IMR-90 (cell line): ENCODE measurements at regions of chr17 and their contacts with region 1.

Region 1: GRCh38 chr17:2029911-2030778 is at the start of gene DPH1:
- DNase-seq: peak; percentile 91
- ATAC-seq: peak; percentile 75
- H3K4me3 ChIP-seq: peak within 1 kb of the TSS; percentile 68
- H3K27ac ChIP-seq: peak within 1 kb of the TSS; percentile 57
- H3K4me1 ChIP-seq: peaks cover 15% of the 10 kb centered on the region
- H3K27me3 ChIP-seq: peaks cover 15% of the 10 kb centered on the region
- CTCF ChIP-seq: no peak
- POLR2A ChIP-seq: peak; percentile 68
- RAD21 ChIP-seq: no peak
- total RNA-seq, gene DPH1: 20.6 and 24.4 TPM in 2 replicates

Region 2: GRCh38 chr17:1573916-1574696 is 456.0 kb before region 1 on chr17:
- CTCF ChIA-PET with region 1: no interaction called
- POLR2A ChIA-PET with region 1: no interaction called
- dilution Hi-C with region 1: no loop called
- in situ Hi-C with region 1: no loop called
- intact Hi-C with region 1: loop called (anchors 5 kb)
- DNase-seq: peak; percentile 66
- ATAC-seq: peak; percentile 58
- H3K4me3 ChIP-seq: no peak overlapping the region
- H3K27ac ChIP-seq: no peak overlapping the region; the same call in 1 of the 2 replicates
- H3K4me1 ChIP-seq: peaks cover 15% of the 10 kb centered on the region
- H3K27me3 ChIP-seq: no peaks in the 10 kb centered on the region
- CTCF ChIP-seq: peak; percentile 96
- POLR2A ChIP-seq: no peak
- RAD21 ChIP-seq: peak; percentile 91

Region 3: DNA sequence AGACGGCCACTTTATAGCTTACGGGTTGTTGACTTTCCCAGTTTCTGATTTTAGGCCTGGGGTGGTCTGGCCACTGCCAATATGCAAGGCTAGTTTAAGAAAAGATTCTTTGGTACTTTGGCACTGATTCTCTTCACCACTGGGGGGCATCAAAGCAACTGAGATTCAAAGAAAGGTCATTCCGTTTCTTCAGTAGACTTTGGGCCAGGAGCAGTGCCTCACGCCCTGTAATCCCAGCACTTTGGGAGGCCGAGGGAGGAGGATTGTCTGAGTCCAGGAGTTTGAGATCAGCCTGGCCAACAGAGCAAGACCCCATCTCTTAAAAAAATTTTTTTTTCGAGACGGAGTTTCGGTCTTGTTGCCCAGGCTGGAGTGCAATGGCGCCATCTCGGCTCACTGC is 147.3 kb before region 1 on chr17:
- CTCF ChIA-PET with region 1: interaction called, 4 read pairs
- POLR2A ChIA-PET with region 1: no interaction called
- dilution Hi-C with region 1: no loop called
- in situ Hi-C with region 1: no loop called
- intact Hi-C with region 1: loop called (anchors 1 kb)
- DNase-seq: peak; percentile 24
- ATAC-seq: no peak
- H3K4me3 ChIP-seq: no peak overlapping the region
- H3K27ac ChIP-seq: no peak overlapping the region
- H3K4me1 ChIP-seq: no peaks in the 10 kb centered on the region
- H3K27me3 ChIP-seq: no peaks in the 10 kb centered on the region
- CTCF ChIP-seq: peak; percentile 58
- POLR2A ChIP-seq: no peak
- RAD21 ChIP-seq: peak; percentile 50

Region 4: GRCh38 chr17:1908699-1909309 is 121.3 kb before region 1 on chr17:
- CTCF ChIA-PET with region 1: interaction called, 18 read pairs
- POLR2A ChIA-PET with region 1: no interaction called
- dilution Hi-C with region 1: no loop called
- in situ Hi-C with region 1: loop called (anchors 5 kb)
- intact Hi-C with region 1: loop called (anchors 1 kb)
- DNase-seq: peak; percentile 73
- ATAC-seq: peak; percentile 97
- H3K4me3 ChIP-seq: no peak overlapping the region
- H3K27ac ChIP-seq: no peak overlapping the region
- H3K4me1 ChIP-seq: no peaks in the 10 kb centered on the region; the same call in 1 of the 2 replicates
- H3K27me3 ChIP-seq: peaks cover 72% of the 10 kb centered on the region
- CTCF ChIP-seq: peak; percentile 83
- POLR2A ChIP-seq: no peak
- RAD21 ChIP-seq: peak; percentile 86